Gastrocnemius medialis (tissue), 4 donors: ENCODE measurements at regions of chr3 and their contacts with region 1.

Region 1: GRCh38 chr3:98994128-98994762 is 92.8 kb upstream of the DCBLD2 start:
- DNase-seq: no peak
- ATAC-seq: peak in 1 of 2 donors; percentile 65
- H3K4me3 ChIP-seq: no peak overlapping the region
- H3K27ac ChIP-seq: no peak overlapping the region
- H3K4me1 ChIP-seq: no peaks in the 10 kb centered on the region
- H3K27me3 ChIP-seq: no peaks in the 10 kb centered on the region
- CTCF ChIP-seq: peak; percentile 10 to 62 (median 54)
- POLR2A ChIP-seq: no peak

Region 2: GRCh38 chr3:98763076-98763475 is 231.2 kb before region 1 on chr3 and contains the start of gene ST3GAL6:
- in situ Hi-C with region 1: no loop called
- intact Hi-C with region 1: no loop called
- DNase-seq: peak; percentile 11 to 35
- ATAC-seq: peak in 1 of 2 donors; percentile 46
- H3K4me3 ChIP-seq: no peak within 1 kb of the TSS
- H3K27ac ChIP-seq: peak within 1 kb of the TSS in 1 of 4 donors; percentile 6
- H3K4me1 ChIP-seq: peaks cover 22 to 63% of the 10 kb centered on the region in 2 donors
- H3K27me3 ChIP-seq: no peaks in the 10 kb centered on the region
- CTCF ChIP-seq: no peak
- POLR2A ChIP-seq: no peak
- total RNA-seq, gene ST3GAL6: 7.4 to 15.0 (median 11.3) TPM

Region 3: DNA sequence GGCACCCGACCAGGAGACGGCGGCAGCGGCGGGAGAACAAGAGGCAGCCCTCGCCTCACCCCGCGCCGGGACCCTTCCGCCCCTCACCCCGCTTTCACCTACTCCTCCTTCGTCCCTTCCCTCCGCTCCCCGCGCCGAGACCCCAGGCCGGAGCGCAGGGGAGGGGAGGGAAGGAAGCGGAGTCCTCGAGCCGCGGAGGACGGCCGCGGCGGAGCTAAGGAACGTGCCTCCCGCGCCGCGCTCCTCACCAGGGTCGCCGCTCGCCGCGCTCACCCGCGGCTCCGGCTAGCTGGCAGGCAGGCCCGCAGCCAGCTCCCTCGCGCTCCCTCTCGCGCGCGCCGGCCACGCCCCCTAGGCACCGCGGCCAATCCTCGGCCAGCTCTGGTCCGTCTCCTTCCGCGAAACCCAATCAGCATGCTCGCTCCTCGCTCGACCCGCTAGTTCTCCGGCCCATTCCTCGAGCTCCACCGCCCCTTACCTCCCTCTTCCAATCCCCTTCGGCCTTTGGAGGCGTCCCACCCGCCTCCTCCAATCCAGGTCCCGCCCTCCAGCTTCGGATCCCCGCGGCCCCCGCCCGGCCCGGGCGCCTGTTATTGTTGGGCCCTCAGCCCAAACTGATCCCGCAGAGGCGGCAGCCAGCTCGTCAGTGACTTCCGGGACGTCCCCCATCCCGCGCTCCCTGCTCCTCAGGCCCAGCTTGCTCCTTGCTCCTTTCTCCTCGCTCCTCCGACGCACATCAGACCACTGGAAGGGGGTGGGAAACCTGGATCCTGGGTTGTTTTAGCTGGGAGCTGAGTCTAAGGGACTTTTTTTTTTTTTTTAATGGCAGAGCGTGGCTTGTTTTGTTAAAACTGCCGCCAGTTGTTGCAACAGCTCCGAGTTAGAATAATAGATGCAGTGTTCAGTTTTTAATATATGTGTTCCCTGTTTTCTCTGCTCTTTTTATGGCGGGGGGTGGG is 92.6 kb before region 1 on chr3 and contains the start of gene DCBLD2:
- in situ Hi-C with region 1: no loop called
- intact Hi-C with region 1: loop called (anchors 5 kb)
- DNase-seq: peak; percentile 98
- ATAC-seq: peak; percentile 99
- H3K4me3 ChIP-seq: peak within 1 kb of the TSS; percentile 83 to 96 (median 88)
- H3K27ac ChIP-seq: peak within 1 kb of the TSS; percentile 87 to 91 (median 89)
- H3K4me1 ChIP-seq: peaks cover 4 to 15% of the 10 kb centered on the region in 2 donors
- H3K27me3 ChIP-seq: no peaks in the 10 kb centered on the region
- CTCF ChIP-seq: no peak
- POLR2A ChIP-seq: peak; percentile 87 to 95
- total RNA-seq, gene DCBLD2: 5.6 to 9.0 (median 6.7) TPM